K562 (cell line): ENCODE measurements at regions of chr10 and their contacts with region 1.

Region 1: DNA sequence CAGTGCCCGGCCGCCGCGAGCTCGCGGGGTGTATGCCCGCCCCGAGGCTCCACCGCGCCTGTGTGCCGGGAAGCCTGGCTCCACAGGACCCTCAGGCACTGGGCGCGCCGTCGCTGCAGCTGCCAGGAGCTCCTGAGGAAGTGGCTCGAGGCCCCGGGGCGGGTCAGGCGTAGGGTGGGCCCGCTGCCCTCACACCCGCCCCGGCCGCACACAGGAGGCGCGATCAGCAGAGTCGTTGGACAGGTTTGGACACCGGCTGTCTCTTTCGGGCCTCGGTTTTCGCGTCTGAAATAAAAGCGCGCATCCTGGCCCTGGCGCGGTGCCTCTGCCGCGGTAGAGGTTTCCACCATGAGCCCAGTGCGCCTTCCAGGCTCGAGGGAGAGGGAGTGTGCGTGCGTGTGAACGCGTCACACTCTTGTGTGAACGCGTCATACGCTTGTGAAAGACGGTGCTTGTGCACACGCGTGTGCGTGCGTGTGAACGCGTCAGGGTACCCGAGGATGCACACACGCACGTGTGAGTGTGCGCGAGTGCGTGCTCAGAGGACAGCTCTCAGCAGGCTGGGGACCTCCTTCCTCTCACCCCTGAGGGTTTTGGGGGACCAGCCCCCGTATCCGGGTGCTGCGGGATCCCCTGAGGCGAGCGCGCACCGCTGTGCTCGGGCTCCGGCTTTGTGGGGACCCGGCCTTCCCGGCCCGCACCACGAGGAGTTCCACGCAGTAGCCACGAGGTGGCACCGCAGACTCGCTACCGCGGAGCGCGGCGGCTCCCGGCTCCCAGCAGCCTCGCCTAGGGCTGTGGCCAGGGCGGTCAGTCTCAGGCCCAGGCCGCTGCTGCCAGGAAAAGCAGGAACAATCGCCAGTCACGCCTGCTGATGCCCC is 83.8 kb downstream of the BMS1 start:
- DNase-seq: peak; percentile 79 to 84 (median 80)
- ATAC-seq: peak; percentile 100
- H3K4me3 ChIP-seq: no peak overlapping the region
- H3K27ac ChIP-seq: no peak overlapping the region
- H3K4me1 ChIP-seq: peaks cover 0 to 12% of the 10 kb centered on the region in 2 experiments; a peak in 3 of 5 replicates
- H3K27me3 ChIP-seq: peaks cover 10 to 36% of the 10 kb centered on the region in 2 experiments; a peak in 3 of 5 replicates
- CTCF ChIP-seq: peak; percentile 61 to 88 (median 77)
- EP300 ChIP-seq: no peak
- POLR2A ChIP-seq: no peak
- RAD21 ChIP-seq: peak; percentile 87 to 95

Region 2: DNA sequence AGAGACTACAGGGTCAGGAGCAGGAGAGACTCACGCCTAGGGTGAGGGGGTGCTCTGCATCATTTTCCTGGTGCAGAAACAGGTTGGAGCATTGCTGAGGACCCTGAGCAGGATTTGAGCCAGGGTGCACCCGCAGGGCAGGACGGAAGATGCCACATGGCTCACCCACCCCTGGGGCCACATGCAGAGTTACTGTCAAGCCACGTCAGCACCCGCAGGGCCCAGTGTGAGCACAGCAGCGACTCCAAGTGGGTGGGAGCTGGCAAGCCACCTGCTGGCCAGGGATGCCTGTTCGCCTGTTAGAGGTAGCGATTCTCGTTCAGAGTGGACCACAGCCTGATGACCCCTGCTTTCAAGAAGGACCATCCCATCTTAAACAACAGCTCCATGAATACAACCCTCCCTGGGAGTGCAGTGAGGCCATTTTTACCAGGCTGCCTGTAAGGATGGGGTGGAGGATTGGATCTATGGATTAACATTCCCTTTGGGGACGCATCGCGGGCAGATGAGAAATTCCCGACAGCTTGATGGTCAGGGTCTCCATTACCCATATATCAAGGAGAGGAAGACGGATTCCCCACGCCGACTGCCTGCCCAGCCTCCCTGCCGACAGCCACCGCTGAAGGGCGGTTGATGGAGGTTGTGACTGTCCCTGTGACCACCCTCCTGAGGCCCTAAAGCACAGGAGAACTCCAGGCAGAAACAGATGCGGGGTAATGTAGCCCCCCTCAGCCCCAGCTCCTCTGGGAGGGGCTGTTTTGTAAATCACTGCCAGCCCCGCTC is 109.4 kb after region 1 on chr10:
- CTCF ChIA-PET with region 1: no interaction called
- POLR2A ChIA-PET with region 1: no interaction called
- in situ Hi-C with region 1: no loop called
- intact Hi-C with region 1: loop called (anchors 5 kb)
- DNase-seq: peak in 3 of 4 experiments; percentile 39 to 58 (median 50)
- ATAC-seq: peak; percentile 89
- H3K4me3 ChIP-seq: no peak overlapping the region
- H3K27ac ChIP-seq: no peak overlapping the region
- H3K4me1 ChIP-seq: peaks cover 0 to 13% of the 10 kb centered on the region in 2 experiments; a peak in 2 of 5 replicates
- H3K27me3 ChIP-seq: peaks cover 0 to 30% of the 10 kb centered on the region in 2 experiments; a peak in 4 of 5 replicates
- CTCF ChIP-seq: peak; percentile 61 to 85 (median 62)
- EP300 ChIP-seq: no peak
- POLR2A ChIP-seq: no peak
- RAD21 ChIP-seq: peak in 1 of 2 experiments; percentile 47; a peak in 2 of 4 replicates

Region 3: GRCh38 chr10:43013065-43013464 is 146.7 kb after region 1 on chr10:
- CTCF ChIA-PET with region 1: no interaction called
- POLR2A ChIA-PET with region 1: no interaction called
- in situ Hi-C with region 1: no loop called
- intact Hi-C with region 1: no loop called
- DNase-seq: no peak
- ATAC-seq: no peak
- H3K4me3 ChIP-seq: no peak overlapping the region
- H3K27ac ChIP-seq: no peak overlapping the region
- H3K4me1 ChIP-seq: no peaks in the 10 kb centered on the region
- H3K27me3 ChIP-seq: no peaks in the 10 kb centered on the region; a peak in 1 of 5 replicates
- CTCF ChIP-seq: no peak
- EP300 ChIP-seq: no peak
- POLR2A ChIP-seq: no peak
- RAD21 ChIP-seq: no peak

Region 4: GRCh38 chr10:43105102-43105785 is 238.9 kb after region 1 on chr10:
- CTCF ChIA-PET with region 1: interaction called, 4 read pairs
- POLR2A ChIA-PET with region 1: no interaction called
- in situ Hi-C with region 1: no loop called
- intact Hi-C with region 1: loop called (anchors 1 kb)
- DNase-seq: peak; percentile 79 to 96 (median 92)
- ATAC-seq: peak; percentile 96
- H3K4me3 ChIP-seq: peak overlapping the region; percentile 26
- H3K27ac ChIP-seq: no peak overlapping the region
- H3K4me1 ChIP-seq: peaks cover 0 to 26% of the 10 kb centered on the region in 2 experiments; a peak in 3 of 5 replicates
- H3K27me3 ChIP-seq: peaks cover 10 to 53% of the 10 kb centered on the region in 2 experiments; a peak in 4 of 5 replicates
- CTCF ChIP-seq: peak; percentile 97 to 99 (median 98)
- EP300 ChIP-seq: no peak
- POLR2A ChIP-seq: no peak
- RAD21 ChIP-seq: peak; percentile 92 to 98